ENCODE measurements at regions of chr19 and their contacts with region 1.

Region 1: GRCh38 chr19:55339048-55339888 is at the start of gene KMT5C:
- DNase-seq: peak; percentile 100
- ATAC-seq: peak; percentile 86
- H3K4me3 Mint-ChIP-seq: peak within 1 kb of the TSS; percentile 86
- H3K27ac Mint-ChIP-seq: peak within 1 kb of the TSS; percentile 97
- H3K4me1 Mint-ChIP-seq: peaks cover 18% of the 10 kb centered on the region
- H3K27me3 Mint-ChIP-seq: peaks cover 2% of the 10 kb centered on the region
- total RNA-seq, gene KMT5C: 27.5 to 32.3 TPM

Region 2: GRCh38 chr19:54463531-54464043 is 875.7 kb before region 1 on chr19 and contains the start of gene LENG9:
- CTCF ChIA-PET with region 1: no interaction called
- POLR2A ChIA-PET with region 1: no interaction called
- intact Hi-C with region 1: no loop called
- DNase-seq: peak; percentile 100
- ATAC-seq: peak; percentile 69
- H3K4me3 Mint-ChIP-seq: peak within 1 kb of the TSS; percentile 80
- H3K27ac Mint-ChIP-seq: peak within 1 kb of the TSS; percentile 91
- H3K4me1 Mint-ChIP-seq: peaks cover 26% of the 10 kb centered on the region
- H3K27me3 Mint-ChIP-seq: peaks cover 6% of the 10 kb centered on the region
- total RNA-seq, gene LENG9: 5.0 to 5.1 TPM

Region 3: GRCh38 chr19:55062734-55063492 is 276.4 kb before region 1 on chr19 and contains the start of gene RDH13:
- CTCF ChIA-PET with region 1: no interaction called
- POLR2A ChIA-PET with region 1: no interaction called
- intact Hi-C with region 1: loop called in 1 of 2 experiments (anchors 1 kb)
- DNase-seq: peak; percentile 100
- ATAC-seq: peak; percentile 100
- H3K4me3 Mint-ChIP-seq: peak within 1 kb of the TSS; percentile 79
- H3K27ac Mint-ChIP-seq: peak within 1 kb of the TSS; percentile 61
- H3K4me1 Mint-ChIP-seq: peaks cover 9% of the 10 kb centered on the region
- H3K27me3 Mint-ChIP-seq: peaks cover 23% of the 10 kb centered on the region
- total RNA-seq, gene RDH13: 11.9 to 12.8 TPM

Region 4: GRCh38 chr19:55178781-55179599 is 160.3 kb before region 1 on chr19:
- CTCF ChIA-PET with region 1: no interaction called
- POLR2A ChIA-PET with region 1: no interaction called
- intact Hi-C with region 1: loop called in 1 of 2 experiments (anchors 1 kb)
- DNase-seq: peak; percentile 95
- ATAC-seq: peak; percentile 81
- H3K4me3 Mint-ChIP-seq: peak overlapping the region; percentile 61
- H3K27ac Mint-ChIP-seq: no peak overlapping the region
- H3K4me1 Mint-ChIP-seq: peaks cover 20% of the 10 kb centered on the region
- H3K27me3 Mint-ChIP-seq: peaks cover 49% of the 10 kb centered on the region

Region 5: GRCh38 chr19:55206664-55207500 is 132.4 kb before region 1 on chr19:
- CTCF ChIA-PET with region 1: no interaction called
- POLR2A ChIA-PET with region 1: no interaction called
- intact Hi-C with region 1: no loop called
- DNase-seq: peak; percentile 76
- ATAC-seq: peak; percentile 96
- H3K4me3 Mint-ChIP-seq: no peak overlapping the region
- H3K27ac Mint-ChIP-seq: no peak overlapping the region
- H3K4me1 Mint-ChIP-seq: peaks cover 2% of the 10 kb centered on the region
- H3K27me3 Mint-ChIP-seq: peaks cover 25% of the 10 kb centered on the region

Region 6: GRCh38 chr19:55353803-55354697 is 14.8 kb after region 1 on chr19:
- CTCF ChIA-PET with region 1: interaction called, 6 read pairs
- POLR2A ChIA-PET with region 1: interaction called, 4 read pairs
- intact Hi-C with region 1: loop called in 1 of 2 experiments (anchors 1 kb)
- DNase-seq: peak; percentile 71
- ATAC-seq: peak; percentile 85
- H3K4me3 Mint-ChIP-seq: peak overlapping the region; percentile 63
- H3K27ac Mint-ChIP-seq: no peak overlapping the region
- H3K4me1 Mint-ChIP-seq: peaks cover 13% of the 10 kb centered on the region
- H3K27me3 Mint-ChIP-seq: peaks cover 42% of the 10 kb centered on the region

Region 7: DNA sequence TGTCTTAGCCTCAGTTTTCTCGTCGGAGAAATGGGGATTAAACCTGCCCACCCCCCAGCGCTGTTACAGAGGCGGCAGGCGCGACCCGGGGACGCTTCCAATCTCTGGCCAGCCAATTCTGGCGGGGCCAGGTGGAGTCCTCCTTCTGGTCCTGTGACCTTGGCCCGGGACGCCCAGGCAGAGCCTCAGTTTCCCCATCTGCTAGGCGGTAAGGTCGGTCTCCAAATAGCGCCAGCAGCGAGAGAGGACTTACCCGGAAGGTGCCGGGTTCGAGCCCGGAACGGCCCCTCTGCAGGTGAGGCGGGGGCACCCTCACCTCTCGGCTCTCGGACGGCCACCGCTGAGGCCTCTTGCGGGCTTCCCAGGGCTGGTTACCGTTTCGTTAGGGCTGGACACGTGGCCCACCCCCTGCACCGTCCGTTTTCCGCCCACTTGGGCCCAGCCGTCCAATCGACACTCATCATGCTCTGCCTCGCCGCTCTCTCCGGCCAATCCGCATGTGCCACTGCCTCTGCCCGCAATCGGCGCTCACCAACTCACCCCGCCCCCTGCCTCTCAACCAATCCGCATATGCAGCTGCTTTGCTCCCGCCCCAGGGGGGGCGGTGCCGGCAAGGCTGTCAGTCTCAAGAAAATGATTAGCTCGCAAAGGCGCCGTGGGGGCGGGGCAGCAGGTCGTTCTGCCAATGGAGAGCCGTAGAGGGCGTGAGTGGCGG is 122.1 kb after region 1 on chr19 and contains the start of gene ISOC2:
- CTCF ChIA-PET with region 1: no interaction called
- POLR2A ChIA-PET with region 1: interaction called, 3 read pairs
- intact Hi-C with region 1: loop called (anchors 1 to 5 kb)
- DNase-seq: peak; percentile 100
- ATAC-seq: peak; percentile 98
- H3K4me3 Mint-ChIP-seq: peak within 1 kb of the TSS; percentile 80
- H3K27ac Mint-ChIP-seq: peak within 1 kb of the TSS; percentile 82
- H3K4me1 Mint-ChIP-seq: peaks cover 14% of the 10 kb centered on the region
- H3K27me3 Mint-ChIP-seq: no peaks in the 10 kb centered on the region
- total RNA-seq, gene ISOC2: 24.3 to 28.0 TPM

Region 8: GRCh38 chr19:55624109-55625003 is 285.1 kb after region 1 on chr19 and contains the start of gene ZNF784:
- CTCF ChIA-PET with region 1: no interaction called
- POLR2A ChIA-PET with region 1: no interaction called
- intact Hi-C with region 1: loop called in 1 of 2 experiments (anchors 1 kb)
- DNase-seq: peak; percentile 97
- ATAC-seq: peak; percentile 70
- H3K4me3 Mint-ChIP-seq: peak within 1 kb of the TSS; percentile 79
- H3K27ac Mint-ChIP-seq: peak within 1 kb of the TSS; percentile 85
- H3K4me1 Mint-ChIP-seq: peaks cover 53% of the 10 kb centered on the region
- H3K27me3 Mint-ChIP-seq: no peaks in the 10 kb centered on the region
- total RNA-seq, gene ZNF784: 3.2 to 4.3 TPM